ENCODE measurements at regions of chr9 and their contacts with region 1.

Region 1: GRCh38 chr9:128802482-128802881 is 15.4 kb downstream of the TBC1D13 start:
- DNase-seq: no peak
- H3K4me3 ChIP-seq: no peak overlapping the region
- H3K27ac ChIP-seq: no peak overlapping the region
- H3K4me1 ChIP-seq: no peaks in the 10 kb centered on the region
- H3K27me3 ChIP-seq: no peaks in the 10 kb centered on the region
- CTCF ChIP-seq: no peak

Region 2: DNA sequence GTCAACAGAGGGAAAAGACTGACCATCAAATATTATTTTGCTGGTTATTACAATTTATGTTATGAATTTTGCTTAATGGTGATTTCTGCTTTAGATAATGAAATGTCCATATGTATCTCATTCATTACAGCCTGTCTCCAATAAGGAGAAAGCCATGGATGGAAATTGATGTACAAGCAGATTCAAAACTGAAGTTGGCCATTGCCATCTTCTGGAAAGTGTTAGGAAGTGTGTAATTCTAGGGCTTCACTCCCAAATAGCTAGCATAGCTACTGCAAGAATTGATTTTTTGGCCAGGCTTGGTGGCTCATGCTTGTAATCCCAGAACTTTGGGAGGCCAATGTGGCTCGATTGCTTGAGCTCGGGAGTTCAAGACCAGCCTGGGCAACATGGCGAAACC is 191.6 kb before region 1 on chr9:
- CTCF ChIA-PET with region 1: interaction called, 12 read pairs
- POLR2A ChIA-PET with region 1: no interaction called
- intact Hi-C with region 1: no loop called
- DNase-seq: no peak
- H3K4me3 ChIP-seq: no peak overlapping the region
- H3K27ac ChIP-seq: no peak overlapping the region
- H3K4me1 ChIP-seq: no peaks in the 10 kb centered on the region
- H3K27me3 ChIP-seq: no peaks in the 10 kb centered on the region
- CTCF ChIP-seq: no peak

Region 3: DNA sequence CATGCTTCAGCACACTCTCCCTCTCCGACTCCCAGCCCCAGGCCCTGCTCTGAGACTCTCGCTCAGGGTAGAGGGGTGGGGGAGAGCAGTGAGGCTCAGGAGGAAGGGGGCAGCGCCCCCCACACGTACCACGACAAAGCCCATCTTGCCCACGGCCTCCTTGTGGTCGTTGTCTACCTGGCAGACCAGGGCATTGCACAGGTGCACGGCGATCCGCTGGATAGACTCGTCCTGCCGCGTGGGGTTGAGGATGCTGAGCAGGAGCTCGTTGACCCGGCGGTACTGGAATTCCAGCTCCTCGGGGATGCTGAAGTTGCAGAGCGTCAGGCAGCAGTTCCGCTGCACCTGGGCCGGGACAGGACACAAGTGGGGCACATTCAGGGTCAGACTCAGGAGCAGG is 60.1 kb before region 1 on chr9:
- CTCF ChIA-PET with region 1: no interaction called
- POLR2A ChIA-PET with region 1: no interaction called
- intact Hi-C with region 1: no loop called
- DNase-seq: no peak
- H3K4me3 ChIP-seq: no peak overlapping the region
- H3K27ac ChIP-seq: no peak overlapping the region
- H3K4me1 ChIP-seq: no peaks in the 10 kb centered on the region
- H3K27me3 ChIP-seq: no peaks in the 10 kb centered on the region
- CTCF ChIP-seq: no peak

Region 4: DNA sequence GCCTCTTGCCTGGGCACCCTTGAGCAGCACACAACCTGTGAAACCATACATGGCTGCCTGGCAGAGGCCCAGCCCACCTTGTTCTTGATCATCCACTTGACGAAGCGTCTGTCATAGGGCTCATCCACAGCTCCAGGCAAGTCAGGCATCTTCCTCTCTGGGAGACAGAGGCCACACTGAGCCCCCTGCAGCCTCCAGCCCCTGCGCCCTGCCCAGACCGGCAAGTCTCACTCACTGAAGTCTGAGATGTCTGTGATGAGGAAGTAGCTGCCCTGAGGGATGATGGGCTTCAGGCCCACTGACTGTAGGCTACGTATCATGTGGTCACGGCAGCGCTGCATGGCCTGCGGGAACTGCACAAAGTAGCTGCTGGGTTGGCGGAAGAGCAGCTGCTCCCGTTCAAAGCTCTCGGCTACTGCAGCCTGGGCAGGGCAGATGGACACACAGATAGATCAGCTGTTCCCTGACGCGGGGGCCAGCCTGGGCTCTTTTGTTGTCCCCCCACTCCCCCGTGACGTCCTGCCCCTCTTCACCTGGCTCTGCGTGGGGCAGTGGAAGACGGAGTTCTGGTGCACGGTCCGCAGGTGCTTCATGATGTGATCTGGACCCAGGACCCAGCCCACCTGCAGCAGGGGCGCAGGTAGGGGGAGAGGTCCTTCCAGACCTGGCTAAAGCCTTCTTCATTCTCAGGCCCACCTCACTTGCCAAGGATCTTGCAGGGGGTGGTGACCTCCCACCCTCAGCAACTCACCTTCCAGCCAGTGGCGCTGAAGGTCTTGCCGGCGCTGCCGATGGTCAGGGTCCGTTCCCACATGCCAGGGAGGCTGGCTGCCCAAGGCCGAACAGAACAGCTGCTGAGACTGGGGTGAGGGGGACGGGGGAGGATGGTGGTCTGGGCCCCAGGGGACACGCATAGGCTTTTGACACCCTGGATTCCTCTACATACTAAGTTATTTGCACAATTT is 33.0 kb after region 1 on chr9:
- CTCF ChIA-PET with region 1: no interaction called
- POLR2A ChIA-PET with region 1: no interaction called
- intact Hi-C with region 1: no loop called
- DNase-seq: no peak
- H3K4me3 ChIP-seq: no peak overlapping the region
- H3K27ac ChIP-seq: no peak overlapping the region
- H3K4me1 ChIP-seq: no peaks in the 10 kb centered on the region
- H3K27me3 ChIP-seq: no peaks in the 10 kb centered on the region
- CTCF ChIP-seq: no peak

Region 5: GRCh38 chr9:129464911-129465833 is 662.7 kb after region 1 on chr9:
- CTCF ChIA-PET with region 1: no interaction called
- POLR2A ChIA-PET with region 1: no interaction called
- intact Hi-C with region 1: no loop called
- DNase-seq: no peak
- H3K4me3 ChIP-seq: no peak overlapping the region
- H3K27ac ChIP-seq: no peak overlapping the region
- H3K4me1 ChIP-seq: peaks cover 36% of the 10 kb centered on the region
- H3K27me3 ChIP-seq: no peaks in the 10 kb centered on the region
- CTCF ChIP-seq: no peak